ENCODE measurements at regions of chr22 and their contacts with region 1.

Region 1: GRCh38 chr22:39900306-39901227 is at the start of gene GRAP2:
- DNase-seq: peak; percentile 65
- ATAC-seq: peak; percentile 92
- H3K4me3 Mint-ChIP-seq: peak within 1 kb of the TSS; percentile 99
- H3K27ac Mint-ChIP-seq: peak within 1 kb of the TSS; percentile 98
- H3K4me1 Mint-ChIP-seq: peaks cover 17% of the 10 kb centered on the region
- H3K27me3 Mint-ChIP-seq: no peaks in the 10 kb centered on the region
- total RNA-seq, gene GRAP2: 263 to 266 TPM

Region 2: GRCh38 chr22:39808081-39808480 is 92.5 kb before region 1 on chr22:
- POLR2A ChIA-PET with region 1: no interaction called
- DNase-seq: no peak
- ATAC-seq: no peak
- H3K4me3 Mint-ChIP-seq: no peak overlapping the region
- H3K27ac Mint-ChIP-seq: no peak overlapping the region
- H3K4me1 Mint-ChIP-seq: peaks cover 17% of the 10 kb centered on the region
- H3K27me3 Mint-ChIP-seq: peaks cover 17% of the 10 kb centered on the region

Region 3: DNA sequence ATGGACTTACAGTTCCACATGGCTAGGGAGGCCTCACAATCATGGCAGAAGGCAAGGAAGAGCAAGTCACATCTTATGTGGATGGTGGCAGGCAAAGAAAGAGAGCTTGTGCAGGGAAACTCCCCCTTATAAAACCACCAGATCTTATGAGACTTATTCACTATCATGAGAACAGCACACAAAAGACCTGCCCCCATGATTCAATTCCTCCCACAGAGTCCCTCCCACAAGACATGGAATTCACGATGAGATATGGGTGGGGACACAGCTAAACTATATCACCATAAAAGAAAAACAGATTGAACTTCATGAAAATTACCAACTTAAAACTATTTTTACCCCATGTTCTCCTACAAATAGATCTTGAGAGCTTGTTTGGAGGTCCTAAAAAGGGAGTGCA is 26.6 kb before region 1 on chr22:
- POLR2A ChIA-PET with region 1: no interaction called
- DNase-seq: no peak
- ATAC-seq: no peak
- H3K4me3 Mint-ChIP-seq: no peak overlapping the region
- H3K27ac Mint-ChIP-seq: no peak overlapping the region
- H3K4me1 Mint-ChIP-seq: peaks cover 2% of the 10 kb centered on the region
- H3K27me3 Mint-ChIP-seq: peaks cover 4% of the 10 kb centered on the region

Region 4: DNA sequence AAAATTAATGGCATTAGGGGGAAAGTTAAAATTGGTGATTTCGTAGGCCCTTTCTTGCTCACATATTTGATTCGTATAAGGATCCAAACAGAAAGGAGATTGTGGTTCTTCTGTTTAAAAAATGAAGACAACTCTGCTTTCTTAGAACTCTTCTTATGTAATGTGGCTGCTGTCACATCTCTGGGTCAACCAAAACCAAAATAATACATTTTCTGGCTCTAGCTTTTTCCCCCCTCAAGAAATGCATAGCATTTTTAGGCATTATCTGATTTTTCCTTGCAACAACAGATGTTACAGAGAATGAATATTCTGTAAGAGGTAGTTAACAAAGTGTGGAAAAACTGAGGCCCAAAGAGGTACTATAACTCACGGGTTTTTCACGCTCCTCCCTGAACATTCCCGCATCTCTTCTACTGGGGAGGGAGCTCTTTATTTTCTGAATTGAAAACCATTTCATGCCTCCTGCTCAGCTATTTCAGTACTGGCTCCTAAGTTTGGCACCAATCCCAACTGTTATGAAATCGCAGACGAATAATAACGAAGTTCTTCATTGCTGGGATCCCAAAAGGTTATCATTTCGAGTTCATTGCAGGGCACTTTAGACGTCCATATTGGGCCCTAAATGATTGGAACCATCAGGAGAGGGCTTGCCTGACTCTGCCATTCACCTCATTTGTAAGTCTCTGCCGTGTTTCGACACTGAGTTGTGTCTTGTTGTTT is 17.4 kb after region 1 on chr22:
- POLR2A ChIA-PET with region 1: interaction called, 543 read pairs
- DNase-seq: no peak
- ATAC-seq: no peak
- H3K4me3 Mint-ChIP-seq: peak overlapping the region; percentile 99
- H3K27ac Mint-ChIP-seq: peak overlapping the region; percentile 96
- H3K4me1 Mint-ChIP-seq: peaks cover 80% of the 10 kb centered on the region
- H3K27me3 Mint-ChIP-seq: no peaks in the 10 kb centered on the region

Region 5: DNA sequence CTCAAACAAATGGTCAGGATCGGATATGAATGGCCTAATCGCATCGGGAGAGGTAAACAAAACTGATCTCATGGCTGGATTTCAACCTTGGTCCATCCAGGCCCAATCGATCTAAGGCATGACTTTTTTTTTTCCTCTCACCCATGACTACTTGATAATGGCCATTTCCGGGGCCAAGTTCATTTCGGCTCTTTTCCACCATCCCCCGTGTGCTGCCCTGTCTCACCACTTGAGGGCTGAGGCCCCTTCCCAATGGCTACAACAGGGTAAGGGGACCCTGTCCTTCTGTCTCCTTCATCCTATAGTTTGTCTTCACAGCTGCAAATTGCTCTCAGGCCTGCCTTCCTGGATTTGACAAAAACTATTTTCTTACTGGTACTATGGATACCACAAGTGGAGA is 27.0 kb after region 1 on chr22:
- POLR2A ChIA-PET with region 1: interaction called, 543 read pairs
- DNase-seq: no peak
- ATAC-seq: peak; percentile 24
- H3K4me3 Mint-ChIP-seq: no peak overlapping the region
- H3K27ac Mint-ChIP-seq: no peak overlapping the region
- H3K4me1 Mint-ChIP-seq: peaks cover 34% of the 10 kb centered on the region
- H3K27me3 Mint-ChIP-seq: no peaks in the 10 kb centered on the region

Region 6: DNA sequence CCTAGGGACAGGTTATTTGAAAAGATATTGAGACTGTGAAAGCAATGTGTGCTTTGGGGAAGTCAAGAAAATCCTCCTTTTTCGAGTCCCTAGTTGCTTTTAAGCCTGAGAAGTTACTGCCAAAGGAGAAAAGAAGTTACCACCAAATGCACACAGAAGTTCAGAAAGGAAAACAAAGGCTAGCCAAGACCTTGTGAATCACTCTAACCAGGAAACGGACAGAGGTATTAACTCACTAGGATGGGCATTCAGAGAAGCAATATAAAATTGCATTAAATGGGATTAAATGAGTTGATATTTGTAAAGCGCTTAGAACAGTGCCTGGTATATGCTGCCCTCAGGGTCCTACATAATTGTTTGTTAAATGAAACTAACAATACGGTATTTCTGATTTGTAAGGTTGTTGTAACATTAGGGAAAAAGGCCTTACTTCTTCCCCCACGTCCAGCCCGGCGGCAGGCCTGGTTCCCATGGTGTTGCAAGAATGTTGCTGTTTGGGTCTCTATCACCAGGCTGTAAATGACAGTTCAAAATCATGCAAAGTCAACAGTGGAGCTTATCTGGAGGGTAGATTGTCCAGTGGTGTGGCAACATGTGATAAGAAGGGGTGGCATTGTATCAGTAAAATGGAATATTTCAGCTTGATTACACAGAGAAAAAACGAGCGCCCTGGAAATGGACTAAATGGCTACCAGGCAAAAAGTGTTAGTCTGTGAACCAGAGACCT is 66.7 kb after region 1 on chr22:
- POLR2A ChIA-PET with region 1: no interaction called
- DNase-seq: no peak
- ATAC-seq: no peak
- H3K4me3 Mint-ChIP-seq: no peak overlapping the region
- H3K27ac Mint-ChIP-seq: no peak overlapping the region
- H3K4me1 Mint-ChIP-seq: peaks cover 24% of the 10 kb centered on the region
- H3K27me3 Mint-ChIP-seq: no peaks in the 10 kb centered on the region

Measured in activated naive CD8-positive, alpha-beta T cell treated with anti-CD3 and anti-CD28 coated beads, Interleukin-2, amount 10 ng/mL, durations not matched to agents 7 days and 5 days (primary cell).